ENCODE measurements at regions of chr10 and their contacts with region 1.

Region 1: DNA sequence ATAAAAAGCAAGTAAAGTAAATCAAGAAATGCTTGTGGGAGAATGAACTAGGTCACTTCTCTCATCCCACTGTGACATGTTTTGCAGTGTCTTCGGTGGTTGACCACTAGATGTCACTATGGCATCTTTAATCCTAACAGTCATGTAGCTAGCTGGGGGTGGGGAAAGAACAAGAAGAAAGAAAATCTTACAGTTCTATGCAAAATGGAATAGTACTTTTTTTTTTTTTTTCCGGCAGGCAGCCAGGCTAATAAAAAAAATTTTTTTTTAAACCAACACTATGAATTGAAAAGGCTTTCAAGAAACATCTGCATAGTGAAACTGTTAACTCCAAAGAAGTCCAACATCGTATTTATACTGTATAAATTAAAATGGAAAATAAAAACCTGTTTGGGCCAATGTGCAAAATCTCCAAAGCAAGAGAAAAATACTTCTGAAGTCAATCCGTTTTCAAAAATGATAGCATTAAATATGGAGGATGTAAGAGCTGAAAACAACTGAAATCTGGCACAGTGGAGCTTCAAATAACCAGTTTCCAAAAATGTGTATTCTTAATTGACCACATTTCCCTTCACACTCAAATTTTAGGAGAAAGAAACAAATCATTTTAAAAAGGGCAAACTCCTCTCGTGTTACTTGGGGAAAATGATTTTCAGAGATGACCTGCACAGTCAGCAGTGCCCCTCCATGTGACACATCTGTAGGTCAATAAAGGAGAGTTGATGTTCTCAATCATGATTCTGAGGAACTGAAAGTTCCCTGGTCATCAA is 38.5 kb downstream of the CDK1 start:
- DNase-seq: peak; percentile 90
- H3K4me3 ChIP-seq: no peak overlapping the region
- H3K27ac ChIP-seq: no peak overlapping the region
- H3K4me1 ChIP-seq: peaks cover 34% of the 10 kb centered on the region
- H3K27me3 ChIP-seq: no peaks in the 10 kb centered on the region
- CTCF ChIP-seq: peak; percentile 90

Region 2: DNA sequence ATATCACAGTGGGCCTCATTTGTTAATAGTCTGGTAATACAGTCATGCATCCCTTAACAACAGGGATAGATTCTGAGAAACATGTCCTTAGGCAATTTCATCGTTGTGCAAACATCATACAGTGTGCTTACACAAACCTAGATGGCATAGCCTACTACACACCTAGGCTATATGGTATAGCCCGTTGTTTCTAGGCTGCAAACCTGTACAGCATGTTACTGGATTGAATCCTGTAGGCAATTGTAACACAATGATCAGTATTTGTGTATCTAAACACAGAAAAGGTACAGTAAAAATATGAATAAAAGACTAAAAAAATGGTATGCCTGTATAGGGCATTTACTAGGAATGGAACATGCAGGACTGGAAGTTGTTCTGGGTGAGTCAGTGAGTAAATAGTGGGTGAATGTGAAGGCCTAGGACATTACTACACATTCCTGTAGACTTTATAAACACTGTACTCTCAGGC is 139.2 kb after region 1 on chr10:
- CTCF ChIA-PET with region 1: no interaction called
- POLR2A ChIA-PET with region 1: no interaction called
- intact Hi-C with region 1: no loop called
- DNase-seq: no peak
- H3K4me3 ChIP-seq: no peak overlapping the region
- H3K27ac ChIP-seq: no peak overlapping the region
- H3K4me1 ChIP-seq: no peaks in the 10 kb centered on the region
- H3K27me3 ChIP-seq: no peaks in the 10 kb centered on the region
- CTCF ChIP-seq: no peak

Region 3: DNA sequence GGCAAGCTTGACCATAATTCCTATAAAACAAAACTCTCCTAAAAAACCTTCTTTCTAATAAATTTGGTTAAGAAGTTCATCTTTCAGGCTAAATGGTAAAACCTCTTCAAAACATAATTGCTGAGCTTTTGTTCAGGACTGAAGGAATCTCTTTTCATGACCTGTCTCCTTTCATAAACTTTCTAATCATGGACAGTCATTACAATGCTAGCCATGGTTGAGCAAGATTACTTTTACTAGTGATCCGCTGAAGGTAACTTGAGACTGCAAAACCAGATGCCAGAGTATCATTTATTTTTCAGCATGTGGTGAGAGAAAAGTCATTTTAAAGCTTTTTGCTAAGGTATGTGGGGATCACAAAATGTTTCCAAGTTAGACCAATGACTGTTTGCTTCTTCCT is 313.6 kb after region 1 on chr10:
- CTCF ChIA-PET with region 1: no interaction called
- POLR2A ChIA-PET with region 1: no interaction called
- intact Hi-C with region 1: no loop called
- DNase-seq: no peak
- H3K4me3 ChIP-seq: no peak overlapping the region
- H3K27ac ChIP-seq: no peak overlapping the region
- H3K4me1 ChIP-seq: peaks cover 8% of the 10 kb centered on the region
- H3K27me3 ChIP-seq: no peaks in the 10 kb centered on the region
- CTCF ChIP-seq: no peak

Region 4: GRCh38 chr10:61140765-61141392 is 324.1 kb after region 1 on chr10:
- CTCF ChIA-PET with region 1: no interaction called
- POLR2A ChIA-PET with region 1: no interaction called
- intact Hi-C with region 1: loop called (anchors 1 kb)
- DNase-seq: peak; percentile 85
- H3K4me3 ChIP-seq: no peak overlapping the region
- H3K27ac ChIP-seq: no peak overlapping the region
- H3K4me1 ChIP-seq: peaks cover 22% of the 10 kb centered on the region
- H3K27me3 ChIP-seq: no peaks in the 10 kb centered on the region
- CTCF ChIP-seq: peak; percentile 80

Region 5: GRCh38 chr10:61284222-61284890 is 467.5 kb after region 1 on chr10:
- CTCF ChIA-PET with region 1: no interaction called
- POLR2A ChIA-PET with region 1: no interaction called
- intact Hi-C with region 1: loop called (anchors 2 kb)
- DNase-seq: peak; percentile 81
- H3K4me3 ChIP-seq: no peak overlapping the region
- H3K27ac ChIP-seq: no peak overlapping the region
- H3K4me1 ChIP-seq: no peaks in the 10 kb centered on the region
- H3K27me3 ChIP-seq: no peaks in the 10 kb centered on the region
- CTCF ChIP-seq: peak; percentile 79

Region 6: DNA sequence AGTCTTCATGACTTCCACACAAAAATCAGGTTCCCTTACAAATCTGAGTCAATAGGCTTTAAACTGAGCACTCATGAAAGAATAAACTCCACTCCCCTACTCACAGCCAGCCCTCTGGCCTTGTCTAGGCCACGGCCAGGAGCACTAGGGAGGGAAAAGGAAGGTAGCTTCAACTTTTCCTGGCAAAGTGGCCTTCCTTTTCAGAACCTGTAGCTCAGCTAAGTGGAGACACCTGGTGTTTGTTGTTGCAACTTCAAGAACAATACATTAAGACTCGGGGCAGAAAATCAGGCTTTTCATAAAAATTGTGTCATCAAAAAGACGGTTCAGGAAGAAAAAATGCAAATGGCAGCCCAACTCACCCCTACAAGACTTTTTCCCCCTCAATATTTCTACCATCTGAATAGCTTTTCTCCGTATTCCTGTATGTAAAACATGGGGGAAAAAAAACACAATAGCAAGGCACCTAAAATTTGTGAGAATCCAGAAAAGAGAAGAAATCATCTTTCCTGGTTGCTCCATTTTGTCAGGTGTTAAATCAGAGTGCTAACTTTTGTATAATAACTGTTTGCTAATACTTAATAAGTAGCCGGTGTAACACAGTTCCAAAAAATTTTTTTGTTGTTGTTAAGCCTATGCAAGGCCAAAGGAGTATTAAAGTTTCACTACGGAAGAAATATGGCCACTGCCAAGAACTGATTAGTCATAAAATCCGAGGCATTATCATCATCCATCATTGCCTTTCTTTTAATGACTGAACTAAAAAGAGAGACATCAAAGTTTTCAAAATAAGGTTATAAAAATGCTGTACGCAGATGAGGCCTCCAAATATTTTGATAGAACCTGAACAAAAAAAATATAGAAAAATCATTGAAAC is 1018.5 kb after region 1 on chr10:
- CTCF ChIA-PET with region 1: no interaction called
- POLR2A ChIA-PET with region 1: no interaction called
- intact Hi-C with region 1: loop called (anchors 10 kb)
- DNase-seq: peak; percentile 80
- H3K4me3 ChIP-seq: peak overlapping the region; percentile 0
- H3K27ac ChIP-seq: peak overlapping the region; percentile 77
- H3K4me1 ChIP-seq: peaks cover 39% of the 10 kb centered on the region
- H3K27me3 ChIP-seq: no peaks in the 10 kb centered on the region
- CTCF ChIP-seq: peak; percentile 57

Region 7: GRCh38 chr10:62244780-62245467 is 1428.1 kb after region 1 on chr10:
- CTCF ChIA-PET with region 1: interaction called, 3 read pairs
- POLR2A ChIA-PET with region 1: no interaction called
- intact Hi-C with region 1: loop called (anchors 10 kb)
- DNase-seq: peak; percentile 91
- H3K4me3 ChIP-seq: peak overlapping the region; percentile 29
- H3K27ac ChIP-seq: peak overlapping the region; percentile 68
- H3K4me1 ChIP-seq: peaks cover 78% of the 10 kb centered on the region
- H3K27me3 ChIP-seq: no peaks in the 10 kb centered on the region
- CTCF ChIP-seq: peak; percentile 93

Measured in A673 (cell line).